ENCODE measurements at regions of chr7 and their contacts with region 1.

Region 1: DNA sequence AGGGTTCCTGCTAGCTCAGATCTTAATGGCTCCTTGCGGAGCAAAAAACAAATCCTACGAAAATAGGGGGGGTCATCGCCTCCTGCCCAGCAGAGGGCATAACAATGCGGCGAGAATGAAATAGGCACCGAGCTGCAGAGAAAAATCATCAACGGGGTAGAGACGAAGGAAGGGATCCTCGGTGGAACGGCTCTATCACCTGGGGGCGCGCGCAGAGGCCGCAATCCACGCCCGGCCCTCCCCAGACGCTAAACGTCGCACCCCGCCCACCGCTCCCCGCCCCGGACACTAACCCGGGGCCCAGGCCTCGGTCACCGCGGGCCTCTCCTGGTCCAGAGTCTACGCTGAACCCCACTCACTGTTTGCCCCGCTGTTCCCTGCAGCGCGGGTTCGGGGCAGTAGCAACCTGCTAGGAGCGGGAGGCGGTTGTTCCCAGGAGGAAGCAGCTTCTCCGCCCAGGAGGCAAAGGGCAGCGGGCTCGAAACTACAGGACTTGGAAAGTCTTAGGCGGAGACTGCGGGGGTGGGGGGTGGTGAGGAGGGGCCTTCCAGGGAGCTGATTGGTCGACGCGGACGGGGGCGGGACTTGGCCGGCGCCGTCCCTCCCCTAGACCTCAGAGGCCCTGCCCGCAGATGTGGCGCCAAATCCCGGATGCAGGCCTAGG is at the start of gene TCAF1:
- DNase-seq: peak; percentile 96
- H3K4me3 Mint-ChIP-seq: peak within 1 kb of the TSS; percentile 95
- H3K27ac Mint-ChIP-seq: peak within 1 kb of the TSS; percentile 93
- H3K4me1 Mint-ChIP-seq: peaks cover 18% of the 10 kb centered on the region
- H3K27me3 Mint-ChIP-seq: no peaks in the 10 kb centered on the region
- CTCF ChIP-seq: peak; percentile 39
- total RNA-seq, gene TCAF1: 22.7 and 27.2 TPM in 2 replicates

Region 2: GRCh38 chr7:143979205-143979758 is 77.5 kb after region 1 on chr7:
- CTCF ChIA-PET with region 1: no interaction called
- POLR2A ChIA-PET with region 1: no interaction called
- intact Hi-C with region 1: loop called (anchors 5 kb)
- DNase-seq: peak; percentile 51
- H3K4me3 Mint-ChIP-seq: no peak overlapping the region
- H3K27ac Mint-ChIP-seq: peak overlapping the region; percentile 33
- H3K4me1 Mint-ChIP-seq: peaks cover 21% of the 10 kb centered on the region
- H3K27me3 Mint-ChIP-seq: no peaks in the 10 kb centered on the region
- CTCF ChIP-seq: no peak

Region 3: GRCh38 chr7:144019467-144019866 is 117.7 kb after region 1 on chr7:
- CTCF ChIA-PET with region 1: interaction called, 3 read pairs
- POLR2A ChIA-PET with region 1: interaction called, 3 read pairs
- intact Hi-C with region 1: loop called (anchors 2 kb)
- DNase-seq: peak; percentile 54
- H3K4me3 Mint-ChIP-seq: no peak overlapping the region
- H3K27ac Mint-ChIP-seq: no peak overlapping the region
- H3K4me1 Mint-ChIP-seq: no peaks in the 10 kb centered on the region
- H3K27me3 Mint-ChIP-seq: no peaks in the 10 kb centered on the region
- CTCF ChIP-seq: no peak

Region 4: GRCh38 chr7:144027070-144027469 is 125.3 kb after region 1 on chr7:
- CTCF ChIA-PET with region 1: interaction called, 5 read pairs
- POLR2A ChIA-PET with region 1: interaction called, 4 read pairs
- intact Hi-C with region 1: loop called (anchors 2 kb)
- DNase-seq: peak; percentile 39
- H3K4me3 Mint-ChIP-seq: no peak overlapping the region
- H3K27ac Mint-ChIP-seq: no peak overlapping the region
- H3K4me1 Mint-ChIP-seq: no peaks in the 10 kb centered on the region
- H3K27me3 Mint-ChIP-seq: peaks cover 20% of the 10 kb centered on the region
- CTCF ChIP-seq: peak; percentile 54

Region 5: GRCh38 chr7:144127703-144128334 is 226.0 kb after region 1 on chr7:
- CTCF ChIA-PET with region 1: interaction called, 3 read pairs
- POLR2A ChIA-PET with region 1: no interaction called
- intact Hi-C with region 1: loop called (anchors 2 kb)
- DNase-seq: peak; percentile 86
- H3K4me3 Mint-ChIP-seq: no peak overlapping the region
- H3K27ac Mint-ChIP-seq: no peak overlapping the region
- H3K4me1 Mint-ChIP-seq: no peaks in the 10 kb centered on the region
- H3K27me3 Mint-ChIP-seq: no peaks in the 10 kb centered on the region
- CTCF ChIP-seq: peak; percentile 76

Measured in MCF 10A (cell line).